ENCODE measurements at regions of chr11 and their contacts with region 1.

Region 1: DNA sequence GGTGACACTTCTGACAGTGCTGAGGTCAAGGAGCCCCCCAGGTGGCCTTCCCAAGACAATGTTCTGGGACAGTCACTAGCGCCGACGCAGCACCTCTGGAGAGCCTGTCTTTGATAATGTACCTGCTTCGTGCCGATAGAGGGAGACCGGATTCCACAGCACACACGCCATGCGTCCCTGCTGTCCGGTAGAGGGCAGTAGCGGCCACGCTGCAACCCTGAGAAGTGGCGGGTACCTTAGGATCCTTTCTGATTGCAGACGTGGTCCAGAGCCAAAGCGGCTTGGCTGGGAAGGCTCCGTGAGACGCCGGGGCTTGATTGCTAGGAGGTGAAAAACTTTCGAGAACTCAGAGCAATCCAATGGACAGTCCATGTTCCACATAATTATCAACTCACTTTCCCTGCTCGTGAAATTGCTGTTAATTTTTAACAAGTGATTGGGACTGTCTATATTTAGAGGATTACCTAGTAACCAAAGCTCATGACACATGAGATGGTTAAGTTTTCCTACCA is 11.4 kb upstream of the BARX2 start:
- DNase-seq: peak; percentile 87 to 91 (median 90)
- ATAC-seq: peak; percentile 97
- H3K4me3 ChIP-seq: no peak overlapping the region
- H3K27ac ChIP-seq: peak overlapping the region in 2 of 4 donors; percentile 37 to 59
- H3K4me1 ChIP-seq: peaks cover 18% of the 10 kb centered on the region
- H3K27me3 ChIP-seq: no peaks in the 10 kb centered on the region
- CTCF ChIP-seq: peak; percentile 97 to 100 (median 100)
- POLR2A ChIP-seq: no peak

Region 2: GRCh38 chr11:129695575-129696308 is 331.5 kb after region 1 on chr11:
- intact Hi-C with region 1: loop called (anchors 5 kb)
- DNase-seq: peak; percentile 76 to 83 (median 77)
- ATAC-seq: peak; percentile 86
- H3K4me3 ChIP-seq: no peak overlapping the region
- H3K27ac ChIP-seq: peak overlapping the region in 3 of 4 donors; percentile 13 to 66 (median 27)
- H3K4me1 ChIP-seq: peaks cover 7% of the 10 kb centered on the region
- H3K27me3 ChIP-seq: no peaks in the 10 kb centered on the region
- CTCF ChIP-seq: peak; percentile 68 to 87 (median 75)
- POLR2A ChIP-seq: no peak

Region 3: GRCh38 chr11:129747071-129747470 is 382.9 kb after region 1 on chr11:
- intact Hi-C with region 1: loop called (anchors 5 kb)
- DNase-seq: no peak
- ATAC-seq: no peak
- H3K4me3 ChIP-seq: no peak overlapping the region
- H3K27ac ChIP-seq: no peak overlapping the region
- H3K4me1 ChIP-seq: peaks cover 7% of the 10 kb centered on the region
- H3K27me3 ChIP-seq: no peaks in the 10 kb centered on the region
- CTCF ChIP-seq: no peak
- POLR2A ChIP-seq: no peak

Measured in body of pancreas (tissue), 4 donors.